CD4-positive, alpha-beta memory T cell (primary cell): ENCODE measurements at regions of chr5 and their contacts with region 1.

Region 1: DNA sequence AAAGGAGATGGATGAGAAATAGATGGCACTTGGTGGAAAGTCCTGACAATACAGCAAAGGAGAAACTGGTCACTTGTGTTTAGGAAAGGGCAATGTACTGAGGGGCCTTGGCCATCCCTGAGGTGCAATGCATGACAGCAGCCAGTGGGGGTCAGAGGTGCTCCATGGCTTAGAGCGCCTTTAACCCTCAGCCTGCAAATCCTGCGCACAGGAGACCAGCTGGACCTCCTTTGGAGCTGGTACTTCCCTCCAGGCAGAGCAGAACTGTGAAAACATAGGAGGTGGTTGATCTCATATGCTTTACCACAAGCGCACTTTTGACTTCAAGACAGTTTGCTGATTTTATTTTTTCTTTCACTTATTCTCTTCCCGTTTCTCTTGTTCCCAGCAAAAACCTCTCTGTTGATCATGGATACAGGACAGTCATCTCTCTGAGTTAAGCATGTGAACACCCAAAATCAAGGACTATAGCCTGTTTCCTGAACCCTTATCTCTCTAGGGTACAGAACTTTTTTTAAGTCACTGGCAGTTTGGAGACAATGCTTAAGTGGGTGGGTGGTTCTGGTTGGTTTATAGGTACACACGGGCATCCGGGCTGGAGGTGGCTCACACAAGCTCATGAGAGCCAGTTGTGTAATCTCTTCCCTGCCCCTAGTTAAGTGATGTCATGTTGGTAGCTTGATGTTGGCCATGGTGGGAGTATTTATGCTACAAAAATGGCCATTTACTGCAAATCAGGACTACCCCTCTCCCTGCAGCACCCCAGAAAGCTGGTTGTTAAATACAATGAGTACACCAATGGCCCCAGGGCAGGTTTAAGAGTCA is 37.6 kb upstream of the ANKRD55 start:
- DNase-seq: peak; percentile 65 to 74 (median 72)
- H3K4me3 ChIP-seq: no peak overlapping the region
- H3K4me3 Mint-ChIP-seq: peak overlapping the region; percentile 51 to 86 (median 74)
- H3K27ac ChIP-seq: no peak overlapping the region
- H3K27ac Mint-ChIP-seq: peak overlapping the region; percentile 30 to 84 (median 50)
- H3K4me1 ChIP-seq: peaks cover 13% of the 10 kb centered on the region
- H3K4me1 Mint-ChIP-seq: peaks cover 11 to 21% (median 13%) of the 10 kb centered on the region in 4 donors
- H3K27me3 ChIP-seq: no peaks in the 10 kb centered on the region
- H3K27me3 Mint-ChIP-seq: no peaks in the 10 kb centered on the region

Region 2: GRCh38 chr5:55982957-55983381 is 287.8 kb before region 1 on chr5:
- CTCF ChIA-PET with region 1: interaction called, 9 read pairs
- POLR2A ChIA-PET with region 1: no interaction called
- intact Hi-C with region 1: loop called (anchors 1 kb)
- DNase-seq: peak in 4 of 5 donors; percentile 22 to 34 (median 28)
- H3K4me3 ChIP-seq: no peak overlapping the region
- H3K4me3 Mint-ChIP-seq: peak overlapping the region; percentile 44 to 81 (median 64)
- H3K27ac ChIP-seq: no peak overlapping the region
- H3K27ac Mint-ChIP-seq: peak overlapping the region in 6 of 7 donors; percentile 19 to 86 (median 74)
- H3K4me1 ChIP-seq: peaks cover 90% of the 10 kb centered on the region
- H3K4me1 Mint-ChIP-seq: peaks cover 53 to 86% (median 69%) of the 10 kb centered on the region in 4 donors
- H3K27me3 ChIP-seq: no peaks in the 10 kb centered on the region
- H3K27me3 Mint-ChIP-seq: no peaks in the 10 kb centered on the region

Region 3: GRCh38 chr5:56064984-56065383 is 205.8 kb before region 1 on chr5:
- CTCF ChIA-PET with region 1: no interaction called
- POLR2A ChIA-PET with region 1: no interaction called
- intact Hi-C with region 1: no loop called
- DNase-seq: no peak
- H3K4me3 ChIP-seq: no peak overlapping the region
- H3K4me3 Mint-ChIP-seq: no peak overlapping the region
- H3K27ac ChIP-seq: no peak overlapping the region
- H3K27ac Mint-ChIP-seq: no peak overlapping the region
- H3K4me1 ChIP-seq: peaks cover 27% of the 10 kb centered on the region
- H3K4me1 Mint-ChIP-seq: peaks cover 25 to 42% (median 31%) of the 10 kb centered on the region in 4 donors
- H3K27me3 ChIP-seq: no peaks in the 10 kb centered on the region
- H3K27me3 Mint-ChIP-seq: no peaks in the 10 kb centered on the region

Region 4: DNA sequence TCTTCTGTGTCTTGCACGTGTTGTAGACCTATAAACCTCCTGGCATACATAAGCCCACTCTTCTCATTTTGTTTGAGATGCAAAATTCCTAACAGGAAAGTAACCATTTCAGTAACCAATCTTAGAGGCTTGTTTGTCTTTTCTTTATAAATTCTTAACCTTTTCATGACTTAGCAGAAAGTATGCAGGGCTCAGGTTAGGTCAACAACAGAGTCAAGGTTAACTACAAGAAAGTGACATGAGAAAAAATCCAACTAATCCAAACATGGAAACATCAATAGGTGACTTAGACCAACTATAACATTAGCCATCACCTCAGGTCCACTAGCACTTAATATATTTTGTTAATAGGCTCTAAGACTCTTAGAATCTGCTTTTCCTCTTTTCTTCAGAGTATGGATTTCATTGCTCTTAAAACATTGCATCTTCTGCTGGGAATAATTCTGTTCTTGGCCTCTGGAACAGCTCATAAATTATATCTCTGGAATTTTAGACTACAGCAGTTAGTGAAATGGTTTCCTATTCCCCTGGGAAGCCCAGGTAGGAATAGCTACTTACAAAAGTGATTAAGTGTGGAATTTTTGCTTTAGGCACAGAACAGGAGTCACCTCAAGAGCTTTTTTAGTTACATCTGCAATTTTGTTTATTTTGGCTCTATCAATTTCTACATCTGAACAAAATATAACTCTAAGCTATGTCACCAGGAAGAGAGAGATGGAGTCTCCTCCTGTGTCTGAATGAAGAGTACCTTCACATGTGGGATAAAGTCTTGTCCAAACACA is 117.6 kb after region 1 on chr5:
- CTCF ChIA-PET with region 1: no interaction called
- POLR2A ChIA-PET with region 1: no interaction called
- intact Hi-C with region 1: loop called (anchors 2 kb)
- DNase-seq: no peak
- H3K4me3 ChIP-seq: no peak overlapping the region
- H3K4me3 Mint-ChIP-seq: no peak overlapping the region
- H3K27ac ChIP-seq: no peak overlapping the region
- H3K27ac Mint-ChIP-seq: no peak overlapping the region
- H3K4me1 ChIP-seq: no peaks in the 10 kb centered on the region
- H3K4me1 Mint-ChIP-seq: peaks cover 0 to 7% (median 5%) of the 10 kb centered on the region in 4 donors
- H3K27me3 ChIP-seq: no peaks in the 10 kb centered on the region
- H3K27me3 Mint-ChIP-seq: no peaks in the 10 kb centered on the region

Region 5: DNA sequence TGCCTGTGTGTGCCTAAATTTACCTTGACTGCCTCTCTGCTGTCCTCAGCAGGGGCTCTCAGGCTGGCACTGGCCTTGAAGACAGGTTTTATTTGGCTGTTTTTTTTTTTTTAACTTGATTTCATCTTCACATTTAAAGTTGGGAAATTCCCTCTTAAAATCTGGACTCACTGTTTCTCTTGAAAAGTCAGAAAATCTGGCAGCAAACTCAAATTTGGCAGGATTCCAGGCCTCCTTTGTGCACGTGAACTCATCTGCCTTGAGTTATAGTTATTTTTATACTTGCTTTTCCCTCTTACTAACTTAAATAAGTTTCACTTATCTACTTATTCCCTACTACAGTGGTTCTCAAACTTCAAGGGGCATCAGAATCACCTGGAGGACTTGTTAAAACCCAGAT is 426.1 kb after region 1 on chr5:
- CTCF ChIA-PET with region 1: interaction called, 6 read pairs
- POLR2A ChIA-PET with region 1: no interaction called
- intact Hi-C with region 1: loop called (anchors 5 kb)
- DNase-seq: peak in 1 of 5 donors; percentile 49
- H3K4me3 ChIP-seq: no peak overlapping the region
- H3K4me3 Mint-ChIP-seq: peak overlapping the region in 4 of 8 donors; percentile 11 to 60 (median 29)
- H3K27ac ChIP-seq: no peak overlapping the region
- H3K27ac Mint-ChIP-seq: peak overlapping the region; percentile 64 to 82 (median 75)
- H3K4me1 ChIP-seq: peaks cover 91% of the 10 kb centered on the region
- H3K4me1 Mint-ChIP-seq: peaks cover 72 to 98% (median 86%) of the 10 kb centered on the region in 4 donors
- H3K27me3 ChIP-seq: no peaks in the 10 kb centered on the region
- H3K27me3 Mint-ChIP-seq: no peaks in the 10 kb centered on the region

Region 6: GRCh38 chr5:56838409-56839039 is 567.7 kb after region 1 on chr5:
- CTCF ChIA-PET with region 1: interaction called, 190 read pairs
- POLR2A ChIA-PET with region 1: interaction called, 38 read pairs
- intact Hi-C with region 1: loop called (anchors 1 kb)
- DNase-seq: peak in 4 of 5 donors; percentile 64 to 69 (median 64)
- H3K4me3 ChIP-seq: peak overlapping the region in 1 of 2 donors; percentile 9
- H3K4me3 Mint-ChIP-seq: peak overlapping the region in 7 of 8 donors; percentile 43 to 88 (median 70)
- H3K27ac ChIP-seq: peak overlapping the region; percentile 45
- H3K27ac Mint-ChIP-seq: peak overlapping the region; percentile 67 to 92 (median 92)
- H3K4me1 ChIP-seq: peaks cover 99% of the 10 kb centered on the region
- H3K4me1 Mint-ChIP-seq: peaks cover 77 to 95% (median 87%) of the 10 kb centered on the region in 4 donors
- H3K27me3 ChIP-seq: no peaks in the 10 kb centered on the region
- H3K27me3 Mint-ChIP-seq: no peaks in the 10 kb centered on the region

Region 7: GRCh38 chr5:56876327-56876726 is 605.5 kb after region 1 on chr5:
- CTCF ChIA-PET with region 1: interaction called, 14 read pairs
- POLR2A ChIA-PET with region 1: no interaction called
- intact Hi-C with region 1: no loop called
- DNase-seq: no peak
- H3K4me3 ChIP-seq: no peak overlapping the region
- H3K4me3 Mint-ChIP-seq: no peak overlapping the region
- H3K27ac ChIP-seq: no peak overlapping the region
- H3K27ac Mint-ChIP-seq: peak overlapping the region in 2 of 7 donors; percentile 0 to 43
- H3K4me1 ChIP-seq: peaks cover 21% of the 10 kb centered on the region
- H3K4me1 Mint-ChIP-seq: peaks cover 28 to 45% (median 30%) of the 10 kb centered on the region in 4 donors
- H3K27me3 ChIP-seq: no peaks in the 10 kb centered on the region
- H3K27me3 Mint-ChIP-seq: no peaks in the 10 kb centered on the region

Region 8: DNA sequence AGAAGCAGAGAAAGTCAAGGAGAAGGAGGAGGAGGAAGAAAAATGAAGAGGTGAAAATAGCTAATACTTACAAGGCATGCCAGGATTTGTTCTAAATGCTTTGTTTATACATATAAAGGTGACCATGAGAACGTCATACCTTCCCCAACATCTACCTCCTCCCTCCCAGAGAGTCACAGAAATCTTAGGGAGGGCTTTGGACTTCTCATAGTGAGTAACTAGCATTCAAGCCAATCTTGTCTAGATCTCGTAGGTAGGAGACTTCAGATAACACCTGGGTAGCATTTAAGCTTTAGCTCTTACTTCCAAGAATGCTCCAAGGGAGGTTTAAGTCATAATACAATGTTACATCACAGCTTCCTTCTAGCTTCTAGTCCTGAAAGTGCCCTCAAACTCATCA is 866.6 kb after region 1 on chr5:
- CTCF ChIA-PET with region 1: interaction called, 38 read pairs
- POLR2A ChIA-PET with region 1: interaction called, 3 read pairs
- intact Hi-C with region 1: loop called (anchors 1 kb)
- DNase-seq: no peak
- H3K4me3 ChIP-seq: no peak overlapping the region
- H3K4me3 Mint-ChIP-seq: no peak overlapping the region
- H3K27ac ChIP-seq: no peak overlapping the region
- H3K27ac Mint-ChIP-seq: no peak overlapping the region
- H3K4me1 ChIP-seq: no peaks in the 10 kb centered on the region
- H3K4me1 Mint-ChIP-seq: peaks cover 0 to 2% (median under 1%) of the 10 kb centered on the region in 4 donors
- H3K27me3 ChIP-seq: no peaks in the 10 kb centered on the region
- H3K27me3 Mint-ChIP-seq: peaks cover 3 to 5% of the 10 kb centered on the region in 2 donors